K562 (cell line): ENCODE measurements at regions of chr11 and their contacts with region 1.

Region 1: GRCh38 chr11:5600374-5600851 is 4.0 kb downstream of the TRIM6 start:
- DNase-seq: peak; percentile 45 to 91 (median 59)
- ATAC-seq: peak; percentile 85
- H3K4me3 ChIP-seq: no peak overlapping the region
- H3K27ac ChIP-seq: peak overlapping the region; percentile 14; the same call in 2 of the 3 replicates
- H3K4me1 ChIP-seq: peaks cover 13 to 18% of the 10 kb centered on the region in 2 experiments; a peak in 4 of 5 replicates
- H3K27me3 ChIP-seq: no peaks in the 10 kb centered on the region
- CTCF ChIP-seq: peak; percentile 91 to 99 (median 99)
- EP300 ChIP-seq: no peak
- POLR2A ChIP-seq: no peak
- RAD21 ChIP-seq: peak; percentile 65 to 86

Region 2: DNA sequence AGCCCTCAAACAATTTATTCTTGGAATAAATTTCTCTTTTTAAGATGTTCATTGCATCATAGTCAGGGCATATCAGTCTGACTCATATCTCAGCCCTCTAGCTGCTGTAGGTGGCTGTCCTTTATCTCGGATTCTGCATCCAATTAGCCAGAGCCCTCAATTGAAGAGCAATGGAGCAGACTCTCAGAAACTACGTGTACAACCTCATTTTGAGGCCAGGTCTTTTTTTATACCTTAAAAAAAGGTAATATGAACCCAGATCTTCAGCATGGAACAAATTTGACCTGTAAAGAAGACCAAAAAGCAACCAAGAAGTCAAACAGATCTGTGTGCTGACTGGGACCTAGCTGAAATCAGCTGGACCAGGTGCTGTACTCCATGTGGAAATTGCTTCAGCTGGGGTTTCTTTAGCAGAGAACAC is 470.9 kb before region 1 on chr11:
- CTCF ChIA-PET with region 1: no interaction called
- POLR2A ChIA-PET with region 1: no interaction called
- in situ Hi-C with region 1: no loop called
- intact Hi-C with region 1: loop called (anchors 5 kb)
- DNase-seq: peak; percentile 30 to 83 (median 50)
- ATAC-seq: peak; percentile 90
- H3K4me3 ChIP-seq: peak overlapping the region; percentile 5; the same call in 1 of the 2 replicates
- H3K27ac ChIP-seq: peak overlapping the region; percentile 77
- H3K4me1 ChIP-seq: peaks cover 5 to 16% of the 10 kb centered on the region in 2 experiments; a peak in 3 of 5 replicates
- H3K27me3 ChIP-seq: no peaks in the 10 kb centered on the region
- CTCF ChIP-seq: peak in 1 of 3 experiments; percentile 10; a peak in 1 of 6 replicates
- EP300 ChIP-seq: peak; percentile 88
- POLR2A ChIP-seq: peak; percentile 55; the same call in 1 of the 2 replicates
- RAD21 ChIP-seq: no peak

Region 3: GRCh38 chr11:5280582-5281102 is 319.8 kb before region 1 on chr11:
- CTCF ChIA-PET with region 1: no interaction called
- POLR2A ChIA-PET with region 1: no interaction called
- in situ Hi-C with region 1: no loop called
- intact Hi-C with region 1: loop called (anchors 10 kb)
- DNase-seq: peak; percentile 91 to 100 (median 94)
- ATAC-seq: peak; percentile 86
- H3K4me3 ChIP-seq: no peak overlapping the region
- H3K27ac ChIP-seq: peak overlapping the region; percentile 87
- H3K4me1 ChIP-seq: peaks cover 29 to 86% of the 10 kb centered on the region in 2 experiments
- H3K27me3 ChIP-seq: no peaks in the 10 kb centered on the region
- CTCF ChIP-seq: peak in 1 of 3 experiments; percentile 11; a peak in 1 of 6 replicates
- EP300 ChIP-seq: peak; percentile 99
- POLR2A ChIP-seq: peak; percentile 44; the same call in 1 of the 2 replicates
- RAD21 ChIP-seq: peak; percentile 33 to 34; a peak in 3 of 4 replicates

Region 4: DNA sequence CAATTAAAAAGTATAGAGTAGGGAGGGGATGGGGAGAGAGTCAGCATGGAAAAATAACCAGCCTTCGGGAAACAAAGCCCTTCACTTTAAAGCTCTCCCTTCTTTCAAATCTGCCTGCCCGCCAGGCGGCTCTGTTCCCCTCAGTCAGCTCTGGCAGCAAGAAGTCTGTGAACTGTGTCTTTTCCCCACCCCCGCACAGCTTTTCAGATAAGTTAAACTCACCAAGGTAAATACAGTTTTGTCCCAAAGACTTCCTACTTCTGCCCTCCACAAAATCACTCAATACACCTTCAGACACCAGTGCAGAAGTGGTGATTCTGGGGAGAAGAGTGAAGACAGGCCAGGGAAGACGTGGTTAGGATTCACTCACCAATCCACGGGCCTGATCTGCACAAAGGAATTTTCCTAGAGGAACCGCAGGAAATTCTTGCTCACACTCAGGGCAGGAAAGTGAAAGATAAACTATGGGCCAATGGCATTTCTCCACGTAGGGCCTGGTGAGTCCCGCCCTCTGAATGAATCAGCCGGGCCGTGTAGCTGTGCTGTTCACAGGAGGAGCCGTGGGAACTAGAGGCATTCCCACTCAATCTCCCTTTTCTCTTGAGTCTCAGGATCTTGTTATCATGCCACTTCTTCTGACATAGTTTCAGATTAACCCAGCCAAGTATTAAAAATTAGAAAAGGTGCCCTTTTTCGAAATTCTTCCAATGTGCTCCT is 84.4 kb after region 1 on chr11 and contains the start of gene TRIM5:
- CTCF ChIA-PET with region 1: interaction called, 5 read pairs
- POLR2A ChIA-PET with region 1: no interaction called
- in situ Hi-C with region 1: no loop called
- intact Hi-C with region 1: loop called (anchors 5 kb)
- DNase-seq: peak; percentile 93 to 96 (median 94)
- ATAC-seq: peak; percentile 99
- H3K4me3 ChIP-seq: peak within 1 kb of the TSS; percentile 45
- H3K27ac ChIP-seq: peak within 1 kb of the TSS; percentile 89
- H3K4me1 ChIP-seq: peaks cover 0 to 2% of the 10 kb centered on the region in 2 experiments; a peak in 2 of 5 replicates
- H3K27me3 ChIP-seq: no peaks in the 10 kb centered on the region
- CTCF ChIP-seq: peak; percentile 77 to 84 (median 82)
- EP300 ChIP-seq: peak; percentile 45; the same call in 1 of the 2 replicates
- POLR2A ChIP-seq: peak; percentile 75
- RAD21 ChIP-seq: peak; percentile 76 to 82
- polyA plus RNA-seq, gene TRIM5: 13.7 to 18.0 TPM

Region 5: GRCh38 chr11:5767056-5767455 is 166.6 kb after region 1 on chr11:
- CTCF ChIA-PET with region 1: no interaction called
- POLR2A ChIA-PET with region 1: no interaction called
- in situ Hi-C with region 1: no loop called
- intact Hi-C with region 1: no loop called
- DNase-seq: no peak
- ATAC-seq: no peak
- H3K4me3 ChIP-seq: no peak overlapping the region
- H3K27ac ChIP-seq: no peak overlapping the region
- H3K4me1 ChIP-seq: no peaks in the 10 kb centered on the region
- H3K27me3 ChIP-seq: no peaks in the 10 kb centered on the region
- CTCF ChIP-seq: no peak
- EP300 ChIP-seq: no peak
- POLR2A ChIP-seq: no peak
- RAD21 ChIP-seq: no peak

Region 6: GRCh38 chr11:5808500-5809121 is 208.2 kb after region 1 on chr11 and contains the start of gene OR52N2:
- CTCF ChIA-PET with region 1: no interaction called
- POLR2A ChIA-PET with region 1: no interaction called
- in situ Hi-C with region 1: no loop called
- intact Hi-C with region 1: loop called (anchors 1 kb)
- DNase-seq: peak; percentile 17 to 60 (median 26)
- ATAC-seq: peak; percentile 70
- H3K4me3 ChIP-seq: no peak within 1 kb of the TSS
- H3K27ac ChIP-seq: peak within 1 kb of the TSS; percentile 73; the same call in 1 of the 3 replicates
- H3K4me1 ChIP-seq: peaks cover 0 to 6% of the 10 kb centered on the region in 2 experiments; a peak in 2 of 5 replicates
- H3K27me3 ChIP-seq: no peaks in the 10 kb centered on the region
- CTCF ChIP-seq: peak; percentile 48 to 56 (median 53); a peak in 5 of 6 replicates
- EP300 ChIP-seq: no peak
- POLR2A ChIP-seq: no peak
- RAD21 ChIP-seq: peak; percentile 26 to 68; a peak in 3 of 4 replicates
- polyA plus RNA-seq, gene OR52N2: not detected

Region 7: GRCh38 chr11:5847711-5848110 is 247.3 kb after region 1 on chr11:
- CTCF ChIA-PET with region 1: no interaction called
- POLR2A ChIA-PET with region 1: no interaction called
- in situ Hi-C with region 1: no loop called
- intact Hi-C with region 1: no loop called
- DNase-seq: peak in 1 of 4 experiments; percentile 3
- ATAC-seq: no peak
- H3K4me3 ChIP-seq: no peak overlapping the region
- H3K27ac ChIP-seq: no peak overlapping the region
- H3K4me1 ChIP-seq: no peaks in the 10 kb centered on the region
- H3K27me3 ChIP-seq: no peaks in the 10 kb centered on the region
- CTCF ChIP-seq: no peak
- EP300 ChIP-seq: no peak
- POLR2A ChIP-seq: no peak
- RAD21 ChIP-seq: no peak

Region 8: GRCh38 chr11:5891216-5891800 is 290.9 kb after region 1 on chr11:
- CTCF ChIA-PET with region 1: no interaction called
- POLR2A ChIA-PET with region 1: no interaction called
- in situ Hi-C with region 1: loop called (anchors 10 kb)
- intact Hi-C with region 1: loop called (anchors 5 kb)
- DNase-seq: peak; percentile 11 to 20 (median 11)
- ATAC-seq: no peak
- H3K4me3 ChIP-seq: no peak overlapping the region
- H3K27ac ChIP-seq: no peak overlapping the region
- H3K4me1 ChIP-seq: no peaks in the 10 kb centered on the region
- H3K27me3 ChIP-seq: peaks cover 0 to 2% of the 10 kb centered on the region in 2 experiments; a peak in 1 of 5 replicates
- CTCF ChIP-seq: peak in 2 of 3 experiments; percentile 43 to 66; a peak in 4 of 6 replicates
- EP300 ChIP-seq: no peak
- POLR2A ChIP-seq: no peak
- RAD21 ChIP-seq: peak; percentile 84 to 85